ENCODE measurements at regions of chr15 and their contacts with region 1.

Region 1: DNA sequence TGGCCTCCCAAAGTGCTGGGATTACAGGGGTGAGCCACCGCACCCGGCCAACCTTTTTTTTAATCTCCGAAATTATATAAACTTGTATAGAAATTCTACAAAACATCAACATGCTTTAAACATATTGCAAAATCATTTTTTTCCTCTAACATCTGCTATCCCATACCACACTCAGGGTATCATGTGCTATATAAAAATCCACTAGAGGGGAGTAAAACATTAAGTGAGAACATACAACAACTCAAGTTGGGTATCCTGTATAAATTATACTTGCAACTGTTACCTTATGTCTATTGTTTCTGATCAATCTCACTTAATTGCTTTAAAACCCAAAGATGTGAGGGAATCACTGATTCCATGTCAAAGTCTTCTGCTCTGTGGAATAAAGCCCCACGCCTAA is 71.9 kb upstream of the FBN1 start:
- DNase-seq: no peak
- H3K4me3 ChIP-seq: no peak overlapping the region
- H3K27ac ChIP-seq: no peak overlapping the region
- H3K4me1 ChIP-seq: no peaks in the 10 kb centered on the region
- H3K27me3 ChIP-seq: no peaks in the 10 kb centered on the region
- CTCF ChIP-seq: no peak
- POLR2A ChIP-seq: no peak

Region 2: DNA sequence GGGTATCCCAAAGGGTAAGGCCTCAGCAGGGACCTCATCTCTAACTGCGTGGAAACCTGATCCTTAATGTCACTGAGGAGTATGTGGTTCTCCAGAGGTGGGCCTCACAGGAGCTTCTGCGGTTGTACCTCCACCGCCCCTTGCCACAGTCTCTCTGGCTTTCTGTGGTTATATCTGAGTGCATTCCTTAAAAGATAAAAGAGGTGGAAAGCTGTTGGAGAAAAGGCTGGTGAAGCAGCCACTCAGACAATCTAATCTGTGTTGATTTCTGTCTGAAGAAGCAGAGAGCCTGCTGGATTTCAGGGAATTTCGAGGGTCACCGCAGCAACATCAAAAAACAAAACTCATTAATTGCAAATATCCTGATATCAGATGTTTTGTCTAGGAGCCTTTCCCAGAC is 948.7 kb before region 1 on chr15:
- intact Hi-C with region 1: loop called (anchors 5 kb)
- DNase-seq: no peak
- H3K4me3 ChIP-seq: no peak overlapping the region
- H3K27ac ChIP-seq: no peak overlapping the region
- H3K4me1 ChIP-seq: no peaks in the 10 kb centered on the region
- H3K27me3 ChIP-seq: no peaks in the 10 kb centered on the region
- CTCF ChIP-seq: no peak
- POLR2A ChIP-seq: no peak

Measured in breast epithelium (tissue), 4 donors.